ENCODE measurements at regions of chr20 and their contacts with region 1.

Region 1: GRCh38 chr20:19205977-19206396 is 6.5 kb upstream of the SLC24A3 start:
- DNase-seq: peak; percentile 76
- H3K4me3 Mint-ChIP-seq: no peak overlapping the region
- H3K27ac Mint-ChIP-seq: no peak overlapping the region
- H3K4me1 Mint-ChIP-seq: no peaks in the 10 kb centered on the region
- H3K27me3 Mint-ChIP-seq: peaks cover 33% of the 10 kb centered on the region

Region 2: DNA sequence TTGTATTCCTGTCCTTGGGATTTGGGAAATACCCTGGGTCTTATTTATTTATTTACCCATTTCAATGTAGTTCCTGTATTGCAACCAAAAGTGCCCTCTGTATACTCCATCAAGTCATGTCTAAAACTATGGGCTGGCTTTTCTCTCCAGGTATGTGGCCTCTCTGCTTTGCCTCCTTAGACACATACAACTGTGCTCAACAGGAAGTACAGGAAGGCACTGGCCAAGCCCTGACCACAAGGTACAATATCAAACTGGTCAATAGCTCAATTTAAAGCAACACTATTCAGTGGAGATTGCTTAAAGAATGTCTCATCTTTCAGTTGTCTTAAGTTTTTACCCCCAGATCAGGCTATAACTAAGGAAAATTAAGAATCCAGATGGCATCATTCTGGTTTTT is 35.8 kb before region 1 on chr20:
- CTCF ChIA-PET with region 1: no interaction called
- intact Hi-C with region 1: no loop called
- DNase-seq: no peak
- H3K4me3 Mint-ChIP-seq: no peak overlapping the region
- H3K27ac Mint-ChIP-seq: no peak overlapping the region
- H3K4me1 Mint-ChIP-seq: no peaks in the 10 kb centered on the region
- H3K27me3 Mint-ChIP-seq: peaks cover 26% of the 10 kb centered on the region

Region 3: GRCh38 chr20:19223652-19224051 is 17.7 kb after region 1 on chr20:
- CTCF ChIA-PET with region 1: no interaction called
- intact Hi-C with region 1: no loop called
- DNase-seq: no peak
- H3K4me3 Mint-ChIP-seq: no peak overlapping the region
- H3K27ac Mint-ChIP-seq: no peak overlapping the region
- H3K4me1 Mint-ChIP-seq: no peaks in the 10 kb centered on the region
- H3K27me3 Mint-ChIP-seq: peaks cover 4% of the 10 kb centered on the region

Region 4: DNA sequence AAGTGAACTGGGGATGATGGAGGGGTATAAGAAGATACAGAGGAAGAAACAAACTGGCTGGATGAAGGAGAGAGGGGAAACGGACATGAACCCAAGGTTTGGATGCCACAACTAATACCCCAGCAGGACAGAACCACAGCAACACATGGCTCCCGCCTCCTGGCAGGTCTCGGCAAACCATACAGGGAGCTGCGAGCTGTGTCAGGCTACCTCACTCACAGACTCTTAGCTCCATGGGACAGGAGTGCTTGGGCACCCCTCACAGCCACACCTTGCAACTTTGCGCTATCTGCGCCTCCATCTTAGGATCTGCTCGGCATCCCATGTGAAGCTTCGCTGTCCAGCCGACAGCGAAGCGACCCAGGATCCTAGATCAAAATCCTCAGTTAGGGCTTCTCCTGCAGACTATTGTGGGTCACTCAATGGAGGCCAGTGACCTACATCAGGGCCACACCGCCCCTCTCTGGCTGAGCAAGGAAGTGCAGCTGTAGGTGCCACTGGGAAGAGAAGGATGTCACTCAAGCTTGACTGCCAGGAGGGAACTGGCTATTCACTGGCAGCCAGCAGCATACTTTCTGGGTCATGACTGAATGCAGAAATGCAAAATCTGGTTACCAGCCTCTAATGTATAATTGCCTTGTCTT is 377.7 kb after region 1 on chr20:
- CTCF ChIA-PET with region 1: interaction called, 6 read pairs
- intact Hi-C with region 1: loop called (anchors 1 kb)
- DNase-seq: peak; percentile 66
- H3K4me3 Mint-ChIP-seq: no peak overlapping the region
- H3K27ac Mint-ChIP-seq: no peak overlapping the region
- H3K4me1 Mint-ChIP-seq: no peaks in the 10 kb centered on the region
- H3K27me3 Mint-ChIP-seq: no peaks in the 10 kb centered on the region

Measured in activated naive CD4-positive, alpha-beta T cell treated with anti-CD3 and anti-CD28 coated beads for 36 hours (primary cell).